K562 (cell line): ENCODE measurements at regions of chr12 and their contacts with region 1.

Region 1: DNA sequence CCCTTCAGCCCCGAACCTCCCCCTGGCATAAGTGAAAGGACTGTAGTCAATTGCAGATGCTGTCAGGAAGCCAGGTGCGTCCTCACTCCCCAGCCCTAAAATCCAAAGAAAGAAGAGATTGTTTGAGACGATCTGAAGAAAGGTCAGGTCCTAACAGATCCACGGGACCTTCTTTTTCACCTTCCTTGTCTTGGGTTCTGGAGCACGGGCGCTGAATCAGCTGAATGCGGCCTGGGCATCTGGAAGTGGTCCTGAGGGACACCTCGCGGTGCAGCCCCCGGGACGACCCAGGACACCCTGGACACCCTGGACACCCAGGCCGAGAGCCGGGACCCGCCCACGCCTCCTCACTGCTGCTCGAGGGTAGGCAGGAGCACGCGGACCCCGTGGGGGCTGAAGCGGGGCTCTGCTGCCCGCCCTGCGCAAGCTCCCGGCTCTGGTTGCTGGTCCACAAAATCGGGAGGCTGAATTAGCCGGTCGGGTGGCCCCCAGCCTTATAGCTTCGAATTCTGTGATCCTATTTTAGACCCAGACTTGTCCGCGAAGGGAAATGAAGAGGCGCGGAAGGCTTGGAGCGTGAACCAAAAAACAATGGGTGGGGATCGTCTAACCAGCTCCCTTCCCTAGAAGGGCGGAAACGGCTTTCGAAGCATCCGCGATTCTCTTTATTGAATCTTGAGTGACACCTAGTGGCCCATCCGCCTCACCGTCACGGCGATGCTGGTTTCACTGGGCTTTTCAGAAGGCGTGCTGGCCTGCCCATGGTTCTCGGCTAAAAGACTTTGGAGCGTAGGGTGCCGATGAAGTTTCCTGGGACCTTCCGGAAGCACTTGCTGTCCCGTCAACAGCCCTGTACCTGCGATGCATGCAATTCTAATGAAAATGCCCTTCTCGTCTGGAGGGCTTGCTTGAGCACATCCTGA is 46.4 kb upstream of the PLXNC1 start:
- DNase-seq: peak; percentile 72 to 91 (median 78)
- ATAC-seq: peak; percentile 79
- H3K4me3 ChIP-seq: peak overlapping the region; percentile 41
- H3K27ac ChIP-seq: no peak overlapping the region
- H3K4me1 ChIP-seq: peaks cover 14 to 18% of the 10 kb centered on the region in 2 experiments
- H3K27me3 ChIP-seq: no peaks in the 10 kb centered on the region
- CTCF ChIP-seq: peak; percentile 80 to 93 (median 91)
- EP300 ChIP-seq: no peak; the same call in 1 of the 2 replicates
- POLR2A ChIP-seq: no peak
- RAD21 ChIP-seq: peak; percentile 91 to 92

Region 2: DNA sequence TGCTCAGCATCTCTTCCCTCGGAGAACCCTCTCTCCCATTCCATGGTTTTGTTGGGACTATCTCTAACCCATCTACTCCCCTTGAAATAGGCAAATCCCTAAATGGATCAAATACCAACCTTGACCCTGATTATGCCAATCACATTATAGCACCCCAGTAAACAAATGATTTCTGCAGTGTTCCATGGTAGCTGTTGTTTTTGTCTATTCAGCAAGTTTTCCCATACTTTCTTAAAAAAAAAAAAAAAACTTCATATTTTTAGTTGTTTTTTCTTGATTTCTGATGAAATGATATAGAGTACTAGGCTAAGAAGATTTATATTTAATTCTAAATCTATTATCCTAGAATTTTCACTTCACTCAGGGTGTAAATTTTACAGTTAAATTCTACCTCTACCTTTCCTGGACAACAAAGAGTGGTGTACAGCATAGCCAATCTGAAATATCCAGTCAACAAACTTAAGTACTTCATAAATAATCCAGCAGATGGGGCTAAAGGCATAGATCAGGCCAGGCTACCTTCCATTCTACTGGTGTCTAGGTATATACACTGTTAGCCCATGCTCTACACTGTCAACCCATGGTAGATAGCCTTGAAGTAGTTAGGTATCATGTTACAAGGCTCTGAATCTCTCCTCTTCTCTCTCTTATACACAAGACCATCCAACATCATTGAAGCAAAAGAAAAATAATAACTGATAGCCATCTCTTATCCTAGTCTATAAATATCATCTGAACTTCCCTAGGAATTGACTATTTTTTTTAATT is 1317.0 kb before region 1 on chr12:
- CTCF ChIA-PET with region 1: interaction called, 3 read pairs
- POLR2A ChIA-PET with region 1: no interaction called
- in situ Hi-C with region 1: loop called (anchors 25 kb)
- intact Hi-C with region 1: no loop called
- DNase-seq: peak; percentile 67 to 77 (median 72)
- ATAC-seq: peak; percentile 100
- H3K4me3 ChIP-seq: no peak overlapping the region
- H3K27ac ChIP-seq: no peak overlapping the region
- H3K4me1 ChIP-seq: no peaks in the 10 kb centered on the region
- H3K27me3 ChIP-seq: no peaks in the 10 kb centered on the region
- CTCF ChIP-seq: peak; percentile 57 to 78 (median 62)
- EP300 ChIP-seq: no peak
- POLR2A ChIP-seq: no peak
- RAD21 ChIP-seq: peak; percentile 87 to 92

Region 3: GRCh38 chr12:92995258-92995903 is 1106.6 kb before region 1 on chr12:
- CTCF ChIA-PET with region 1: no interaction called
- POLR2A ChIA-PET with region 1: no interaction called
- in situ Hi-C with region 1: loop called (anchors 10 kb)
- intact Hi-C with region 1: no loop called
- DNase-seq: no peak
- ATAC-seq: no peak
- H3K4me3 ChIP-seq: no peak overlapping the region
- H3K27ac ChIP-seq: no peak overlapping the region
- H3K4me1 ChIP-seq: peaks cover 0 to under 1% of the 10 kb centered on the region in 2 experiments; a peak in 1 of 5 replicates
- H3K27me3 ChIP-seq: no peaks in the 10 kb centered on the region
- CTCF ChIP-seq: no peak
- EP300 ChIP-seq: no peak
- POLR2A ChIP-seq: no peak
- RAD21 ChIP-seq: no peak

Region 4: GRCh38 chr12:93502802-93503623 is 599.0 kb before region 1 on chr12:
- CTCF ChIA-PET with region 1: interaction called, 62 read pairs
- POLR2A ChIA-PET with region 1: interaction called, 5 read pairs
- in situ Hi-C with region 1: loop called (anchors 5 kb)
- intact Hi-C with region 1: loop called (anchors 2 kb)
- DNase-seq: peak in 2 of 4 experiments; percentile 20 to 64
- ATAC-seq: peak; percentile 76
- H3K4me3 ChIP-seq: no peak overlapping the region
- H3K27ac ChIP-seq: no peak overlapping the region
- H3K4me1 ChIP-seq: no peaks in the 10 kb centered on the region
- H3K27me3 ChIP-seq: no peaks in the 10 kb centered on the region
- CTCF ChIP-seq: peak; percentile 49 to 85 (median 71); a peak in 5 of 6 replicates
- EP300 ChIP-seq: no peak
- POLR2A ChIP-seq: no peak
- RAD21 ChIP-seq: peak; percentile 90 to 92

Region 5: DNA sequence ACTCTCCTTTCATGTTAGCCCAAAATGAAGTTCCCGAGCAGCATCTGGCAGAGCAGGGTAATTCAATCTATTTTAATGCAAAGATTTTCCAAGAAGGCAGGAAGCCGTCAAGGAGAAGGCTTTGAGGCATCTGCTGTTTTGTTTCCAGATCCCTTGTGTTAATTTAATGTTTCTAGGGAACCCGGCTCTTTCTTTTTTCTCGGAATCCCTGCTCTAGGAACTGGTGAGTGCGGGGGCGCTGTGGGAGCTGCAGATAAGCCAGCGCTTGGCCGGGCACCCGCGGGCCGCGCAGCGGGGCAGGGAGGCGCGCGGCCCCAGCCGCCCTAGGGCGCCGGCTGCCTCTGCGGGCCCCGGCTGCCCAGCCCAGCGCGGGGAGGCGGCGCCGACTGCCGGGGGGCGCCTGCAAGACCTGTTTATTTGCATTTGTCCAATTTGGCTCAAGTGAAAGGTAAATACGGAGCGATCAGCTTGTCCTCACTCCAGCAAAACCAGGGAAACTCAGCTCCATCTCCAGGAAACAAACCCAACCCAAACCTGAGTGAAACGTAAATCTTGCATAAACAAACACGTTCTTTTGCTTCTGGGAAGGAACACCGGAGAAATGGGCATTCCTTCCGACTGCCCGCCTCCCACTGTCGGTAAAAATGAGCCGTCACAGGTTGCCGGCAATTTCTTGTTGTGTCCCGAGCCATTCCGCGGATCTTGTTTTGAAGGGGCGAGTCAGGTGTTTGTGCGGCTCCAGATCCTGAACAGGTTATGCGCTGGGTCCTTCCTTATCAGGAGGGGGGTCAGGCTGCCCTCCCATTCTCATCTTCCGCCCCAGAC is 359.7 kb before region 1 on chr12:
- CTCF ChIA-PET with region 1: interaction called, 3 read pairs
- POLR2A ChIA-PET with region 1: interaction called, 4 read pairs
- in situ Hi-C with region 1: no loop called
- intact Hi-C with region 1: loop called (anchors 2 kb)
- DNase-seq: peak; percentile 86 to 96 (median 90)
- ATAC-seq: peak; percentile 88
- H3K4me3 ChIP-seq: peak overlapping the region; percentile 44
- H3K27ac ChIP-seq: peak overlapping the region; percentile 91
- H3K4me1 ChIP-seq: peaks cover 11 to 56% of the 10 kb centered on the region in 2 experiments
- H3K27me3 ChIP-seq: no peaks in the 10 kb centered on the region
- CTCF ChIP-seq: peak; percentile 55 to 82 (median 65); a peak in 5 of 6 replicates
- EP300 ChIP-seq: peak; percentile 95
- POLR2A ChIP-seq: peak; percentile 29; the same call in 1 of the 2 replicates
- RAD21 ChIP-seq: peak; percentile 51 to 88

Region 6: DNA sequence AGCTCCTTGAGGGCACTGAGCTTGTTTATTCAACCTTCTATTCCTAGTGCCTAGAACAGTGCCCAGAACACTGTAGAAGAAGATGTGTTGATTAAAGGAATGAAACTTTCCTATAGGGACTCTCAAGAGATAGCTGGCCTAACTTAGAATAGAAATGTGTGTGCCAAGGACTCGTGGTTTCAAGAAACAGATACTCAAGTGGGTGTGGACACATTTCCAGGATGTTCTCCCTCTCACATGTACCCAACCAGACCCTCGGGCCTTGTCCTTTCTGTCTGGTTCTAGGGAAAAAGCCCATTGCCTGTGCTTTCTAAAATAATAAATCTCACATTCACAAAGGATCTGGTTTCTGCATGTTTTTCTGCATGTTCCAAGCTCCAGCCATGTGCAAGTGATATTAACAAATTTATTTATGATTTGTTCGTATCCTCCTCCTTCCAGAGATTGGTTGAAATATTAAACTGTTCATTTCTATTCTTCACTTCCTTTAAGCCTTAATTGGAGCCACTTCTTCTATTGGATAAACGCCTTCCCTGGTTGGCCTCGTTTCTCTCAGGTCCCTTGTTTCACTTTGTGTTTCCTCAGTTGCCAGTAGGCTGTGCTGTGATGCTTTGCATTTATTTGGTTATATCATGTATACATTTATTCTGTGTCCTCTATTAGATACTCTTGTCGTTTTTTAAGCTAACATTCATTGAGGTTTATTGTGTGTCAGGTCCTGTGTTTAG is 335.0 kb before region 1 on chr12:
- CTCF ChIA-PET with region 1: interaction called, 5 read pairs
- POLR2A ChIA-PET with region 1: no interaction called
- in situ Hi-C with region 1: no loop called
- intact Hi-C with region 1: loop called (anchors 1 kb)
- DNase-seq: peak in 1 of 4 experiments; percentile 61
- ATAC-seq: peak; percentile 62
- H3K4me3 ChIP-seq: no peak overlapping the region
- H3K27ac ChIP-seq: no peak overlapping the region
- H3K4me1 ChIP-seq: peaks cover 4 to 28% of the 10 kb centered on the region in 2 experiments; a peak in 4 of 5 replicates
- H3K27me3 ChIP-seq: no peaks in the 10 kb centered on the region
- CTCF ChIP-seq: peak; percentile 51 to 78 (median 61); a peak in 5 of 6 replicates
- EP300 ChIP-seq: no peak
- POLR2A ChIP-seq: no peak
- RAD21 ChIP-seq: peak; percentile 90 to 93

Region 7: GRCh38 chr12:94057262-94058151 is 44.5 kb before region 1 on chr12:
- CTCF ChIA-PET with region 1: no interaction called
- POLR2A ChIA-PET with region 1: no interaction called
- in situ Hi-C with region 1: no loop called
- intact Hi-C with region 1: no loop called
- DNase-seq: no peak
- ATAC-seq: no peak
- H3K4me3 ChIP-seq: no peak overlapping the region
- H3K27ac ChIP-seq: no peak overlapping the region
- H3K4me1 ChIP-seq: no peaks in the 10 kb centered on the region
- H3K27me3 ChIP-seq: no peaks in the 10 kb centered on the region; a peak in 2 of 5 replicates
- CTCF ChIP-seq: no peak
- EP300 ChIP-seq: no peak
- POLR2A ChIP-seq: no peak
- RAD21 ChIP-seq: no peak

Region 8: DNA sequence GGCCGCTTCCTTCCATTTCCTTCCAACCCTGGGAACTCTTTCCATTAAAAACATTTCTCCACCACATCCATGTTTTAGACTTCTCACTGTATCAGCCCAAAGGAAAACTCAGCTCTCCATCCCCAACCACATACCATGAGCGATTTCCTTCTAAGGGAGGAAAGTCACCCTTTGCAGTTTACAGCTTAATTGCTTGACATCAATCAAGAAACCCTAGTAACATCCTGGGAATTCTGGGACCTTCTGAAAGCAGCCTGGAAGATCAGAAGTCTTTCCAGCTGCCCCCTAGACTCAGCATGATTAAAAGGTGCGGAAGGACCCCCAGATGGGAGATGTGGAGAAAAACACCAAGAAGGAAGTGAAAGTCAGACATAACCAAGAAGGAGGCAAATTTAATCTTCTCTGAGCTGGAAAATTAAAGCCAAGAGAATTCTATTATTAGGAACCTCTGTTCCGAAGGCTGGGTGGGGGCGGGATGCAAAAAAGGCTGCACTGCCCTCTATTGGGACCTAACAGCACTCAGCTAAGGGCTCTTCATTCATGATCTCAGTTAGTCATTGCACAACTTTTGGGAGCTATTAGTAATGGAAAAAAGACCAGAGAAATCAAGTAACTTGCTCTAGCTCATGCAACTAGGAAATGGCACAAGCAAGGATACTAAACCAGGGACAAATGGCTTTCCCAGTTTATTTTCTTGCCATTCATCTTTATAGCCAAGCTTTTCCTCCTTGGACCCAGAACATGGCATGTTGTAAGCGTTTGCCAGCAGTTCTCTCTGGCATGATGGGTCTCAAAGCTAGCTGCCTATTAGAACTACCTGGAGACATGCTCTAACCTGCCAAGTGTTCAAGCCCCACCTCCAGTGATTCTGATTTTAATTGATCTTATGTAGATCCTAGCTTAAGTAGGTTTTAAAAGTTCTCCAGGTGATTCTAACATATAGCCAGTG is 26.7 kb before region 1 on chr12:
- CTCF ChIA-PET with region 1: interaction called, 3 read pairs
- POLR2A ChIA-PET with region 1: interaction called, 8 read pairs
- in situ Hi-C with region 1: no loop called
- intact Hi-C with region 1: loop called (anchors 2 kb)
- DNase-seq: peak; percentile 15 to 62 (median 38)
- ATAC-seq: peak; percentile 93
- H3K4me3 ChIP-seq: no peak overlapping the region
- H3K27ac ChIP-seq: no peak overlapping the region
- H3K4me1 ChIP-seq: peaks cover 0 to 3% of the 10 kb centered on the region in 2 experiments; a peak in 2 of 5 replicates
- H3K27me3 ChIP-seq: peaks cover 0 to 17% of the 10 kb centered on the region in 2 experiments; a peak in 4 of 5 replicates
- CTCF ChIP-seq: peak; percentile 55 to 75 (median 67)
- EP300 ChIP-seq: 0 out of 2 replicates have a peak, but pooled peaks have one; percentile 22
- POLR2A ChIP-seq: no peak
- RAD21 ChIP-seq: peak; percentile 61 to 71

Region 9: DNA sequence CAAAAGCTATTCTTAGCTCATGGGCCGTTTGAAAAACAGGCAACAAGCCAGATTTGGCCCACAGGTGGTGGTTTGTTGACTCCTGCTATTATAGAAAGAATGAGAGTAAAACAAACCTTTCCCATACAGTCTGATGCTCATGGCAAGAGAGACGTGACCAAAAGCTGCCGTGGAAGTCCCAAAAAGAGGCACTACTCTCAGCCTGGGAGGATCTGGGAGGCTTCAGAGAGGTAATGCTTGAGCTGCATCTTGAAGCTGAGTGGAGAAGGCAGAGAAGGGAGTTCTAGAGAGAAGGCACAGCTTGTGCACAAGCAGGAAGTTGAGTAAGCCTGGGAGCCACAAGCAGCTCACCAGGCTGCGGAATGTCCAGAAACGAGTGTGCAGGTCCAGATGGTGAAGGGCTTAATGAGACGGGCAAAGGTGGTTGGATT is 56.0 kb after region 1 on chr12:
- CTCF ChIA-PET with region 1: no interaction called
- POLR2A ChIA-PET with region 1: no interaction called
- in situ Hi-C with region 1: no loop called
- intact Hi-C with region 1: no loop called
- DNase-seq: no peak
- ATAC-seq: no peak
- H3K4me3 ChIP-seq: no peak overlapping the region
- H3K27ac ChIP-seq: no peak overlapping the region
- H3K4me1 ChIP-seq: no peaks in the 10 kb centered on the region
- H3K27me3 ChIP-seq: peaks cover 11 to 15% of the 10 kb centered on the region in 2 experiments; a peak in 4 of 5 replicates
- CTCF ChIP-seq: no peak
- EP300 ChIP-seq: no peak
- POLR2A ChIP-seq: no peak
- RAD21 ChIP-seq: no peak